Sciatic nerve (tissue), 2 donors: ENCODE measurements at regions of chr4 and their contacts with region 1.

Region 1: DNA sequence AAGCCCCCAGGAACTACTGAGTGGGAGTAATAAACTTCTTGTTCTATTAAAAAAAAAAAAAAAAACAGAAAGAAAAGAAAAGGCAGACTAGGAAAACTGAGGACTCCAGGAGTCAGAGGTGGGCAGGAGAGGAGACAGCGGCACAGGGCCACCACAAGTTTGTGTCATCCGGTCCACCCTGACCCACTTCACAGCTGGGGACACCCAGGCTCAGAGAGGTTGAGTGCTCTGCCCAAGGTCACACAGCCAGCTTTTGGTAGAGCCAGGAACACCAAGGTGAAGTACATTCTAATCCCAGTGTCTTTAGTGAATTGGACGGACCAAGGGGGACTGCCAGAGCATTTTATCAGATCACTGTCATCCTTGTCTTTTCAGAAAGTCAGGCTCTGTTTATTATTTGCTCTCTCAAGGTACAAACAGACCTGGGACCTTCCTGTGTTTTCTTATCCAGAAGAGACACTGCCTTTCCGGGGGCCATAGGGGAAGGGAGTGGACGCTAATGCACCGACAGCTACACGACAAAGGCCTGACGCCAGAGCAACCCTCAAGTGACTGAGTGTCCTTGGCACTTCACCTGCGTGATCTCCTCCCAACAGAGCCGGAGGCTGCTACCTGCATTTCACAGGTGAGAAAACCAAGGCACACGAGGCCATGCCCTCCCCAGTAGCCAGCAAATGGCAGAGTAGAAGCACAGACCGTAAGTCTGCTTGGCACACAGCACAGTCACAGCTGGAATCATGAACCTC is 16.5 kb upstream of the ABLIM2 start:
- DNase-seq: no peak
- ATAC-seq: no peak

Region 2: GRCh38 chr4:8150152-8151090 is 24.7 kb before region 1 on chr4:
- intact Hi-C with region 1: no loop called
- DNase-seq: no peak
- ATAC-seq: no peak

Region 3: DNA sequence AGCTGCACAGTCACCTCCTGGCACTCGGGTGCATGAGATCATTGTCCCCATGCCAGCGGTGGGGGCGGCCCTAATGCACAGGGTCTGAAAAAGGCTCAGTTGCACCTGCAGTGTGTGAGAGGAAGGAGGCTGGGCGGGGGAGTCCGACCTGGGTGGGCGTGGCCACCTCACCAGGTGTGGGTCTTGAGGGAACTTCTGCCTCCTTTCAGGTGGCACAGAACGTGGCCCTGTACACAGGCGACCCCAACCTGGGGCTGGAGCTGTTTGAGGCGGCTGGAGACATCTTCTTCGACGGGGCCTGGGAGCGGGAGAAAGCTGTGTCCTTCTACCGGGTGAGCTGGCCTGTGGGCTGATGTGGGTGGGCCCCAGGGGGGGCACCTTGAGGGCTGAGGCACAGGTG is 60.1 kb after region 1 on chr4:
- intact Hi-C with region 1: loop called (anchors 1 kb)
- DNase-seq: no peak
- ATAC-seq: no peak